ENCODE measurements at regions of chr4 and their contacts with region 1.

Region 1: GRCh38 chr4:140326395-140326993 is 47.0 kb upstream of the SCOC start:
- DNase-seq: peak; percentile 33
- ATAC-seq: peak; percentile 93
- H3K4me3 ChIP-seq: no peak overlapping the region
- H3K27ac ChIP-seq: no peak overlapping the region
- H3K4me1 ChIP-seq: no peaks in the 10 kb centered on the region
- H3K27me3 ChIP-seq: no peaks in the 10 kb centered on the region
- CTCF ChIP-seq: peak; percentile 75 to 77 (median 76)
- POLR2A ChIP-seq: no peak
- RAD21 ChIP-seq: peak; percentile 85

Region 2: GRCh38 chr4:140012688-140013486 is 313.6 kb before region 1 on chr4:
- CTCF ChIA-PET with region 1: interaction called, 7 read pairs
- POLR2A ChIA-PET with region 1: no interaction called
- RAD21 ChIA-PET with region 1: interaction called in 1 of 2 experiments, 3 read pairs
- intact Hi-C with region 1: loop called (anchors 1 kb)
- DNase-seq: peak; percentile 50
- ATAC-seq: peak; percentile 98
- H3K4me3 ChIP-seq: no peak overlapping the region
- H3K27ac ChIP-seq: no peak overlapping the region
- H3K4me1 ChIP-seq: peaks cover 3 to 7% of the 10 kb centered on the region in 2 experiments; a peak in 2 of 4 replicates
- H3K27me3 ChIP-seq: no peaks in the 10 kb centered on the region
- CTCF ChIP-seq: peak; percentile 69 to 87 (median 78)
- POLR2A ChIP-seq: no peak
- RAD21 ChIP-seq: peak; percentile 95

Region 3: DNA sequence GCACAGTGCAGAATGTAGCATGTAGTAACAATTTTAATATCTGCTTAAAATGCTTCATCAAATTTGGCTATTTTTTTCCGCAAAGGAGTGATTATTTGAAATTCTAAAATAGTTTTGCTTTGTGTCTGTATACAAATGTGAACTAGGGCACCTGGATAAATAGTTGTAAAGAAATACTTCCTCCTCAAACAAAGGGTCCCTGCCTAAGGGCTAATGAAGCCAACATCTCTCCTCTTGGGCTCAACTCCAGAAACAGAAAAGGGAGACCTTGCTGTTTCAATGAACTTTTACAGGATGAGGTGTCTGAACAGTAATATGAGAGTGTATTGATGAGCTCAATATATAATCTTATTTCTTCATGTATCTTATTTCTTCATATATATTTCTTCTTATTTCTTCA is 16.1 kb after region 1 on chr4:
- CTCF ChIA-PET with region 1: interaction called, 13 read pairs
- POLR2A ChIA-PET with region 1: no interaction called
- RAD21 ChIA-PET with region 1: no interaction called
- intact Hi-C with region 1: no loop called
- DNase-seq: no peak
- ATAC-seq: no peak
- H3K4me3 ChIP-seq: no peak overlapping the region
- H3K27ac ChIP-seq: no peak overlapping the region
- H3K4me1 ChIP-seq: peaks cover 2 to 7% of the 10 kb centered on the region in 2 experiments; a peak in 3 of 4 replicates
- H3K27me3 ChIP-seq: no peaks in the 10 kb centered on the region
- CTCF ChIP-seq: no peak
- POLR2A ChIP-seq: no peak
- RAD21 ChIP-seq: no peak

Region 4: GRCh38 chr4:140581078-140581477 is 254.6 kb after region 1 on chr4:
- CTCF ChIA-PET with region 1: no interaction called
- POLR2A ChIA-PET with region 1: no interaction called
- RAD21 ChIA-PET with region 1: no interaction called
- intact Hi-C with region 1: no loop called
- DNase-seq: no peak
- ATAC-seq: no peak
- H3K4me3 ChIP-seq: no peak overlapping the region
- H3K27ac ChIP-seq: no peak overlapping the region
- H3K4me1 ChIP-seq: no peaks in the 10 kb centered on the region
- H3K27me3 ChIP-seq: no peaks in the 10 kb centered on the region
- CTCF ChIP-seq: no peak
- POLR2A ChIP-seq: no peak
- RAD21 ChIP-seq: no peak

Region 5: GRCh38 chr4:140609548-140610425 is 283.3 kb after region 1 on chr4:
- CTCF ChIA-PET with region 1: interaction called, 18 read pairs
- POLR2A ChIA-PET with region 1: no interaction called
- RAD21 ChIA-PET with region 1: no interaction called
- intact Hi-C with region 1: no loop called
- DNase-seq: peak; percentile 41
- ATAC-seq: peak; percentile 98
- H3K4me3 ChIP-seq: no peak overlapping the region
- H3K27ac ChIP-seq: no peak overlapping the region
- H3K4me1 ChIP-seq: 0 out of 4 replicates have a peak, but pooled peaks cover 0 to 5% of the 10 kb centered on the region in 2 experiments
- H3K27me3 ChIP-seq: no peaks in the 10 kb centered on the region
- CTCF ChIP-seq: peak; percentile 41 to 77 (median 65); a peak in 5 of 6 replicates
- POLR2A ChIP-seq: no peak
- RAD21 ChIP-seq: peak; percentile 80

Measured in HCT116 (cell line).